CD8-positive, alpha-beta T cell (primary cell): ENCODE measurements at regions of chr13 and their contacts with region 1.

Region 1: DNA sequence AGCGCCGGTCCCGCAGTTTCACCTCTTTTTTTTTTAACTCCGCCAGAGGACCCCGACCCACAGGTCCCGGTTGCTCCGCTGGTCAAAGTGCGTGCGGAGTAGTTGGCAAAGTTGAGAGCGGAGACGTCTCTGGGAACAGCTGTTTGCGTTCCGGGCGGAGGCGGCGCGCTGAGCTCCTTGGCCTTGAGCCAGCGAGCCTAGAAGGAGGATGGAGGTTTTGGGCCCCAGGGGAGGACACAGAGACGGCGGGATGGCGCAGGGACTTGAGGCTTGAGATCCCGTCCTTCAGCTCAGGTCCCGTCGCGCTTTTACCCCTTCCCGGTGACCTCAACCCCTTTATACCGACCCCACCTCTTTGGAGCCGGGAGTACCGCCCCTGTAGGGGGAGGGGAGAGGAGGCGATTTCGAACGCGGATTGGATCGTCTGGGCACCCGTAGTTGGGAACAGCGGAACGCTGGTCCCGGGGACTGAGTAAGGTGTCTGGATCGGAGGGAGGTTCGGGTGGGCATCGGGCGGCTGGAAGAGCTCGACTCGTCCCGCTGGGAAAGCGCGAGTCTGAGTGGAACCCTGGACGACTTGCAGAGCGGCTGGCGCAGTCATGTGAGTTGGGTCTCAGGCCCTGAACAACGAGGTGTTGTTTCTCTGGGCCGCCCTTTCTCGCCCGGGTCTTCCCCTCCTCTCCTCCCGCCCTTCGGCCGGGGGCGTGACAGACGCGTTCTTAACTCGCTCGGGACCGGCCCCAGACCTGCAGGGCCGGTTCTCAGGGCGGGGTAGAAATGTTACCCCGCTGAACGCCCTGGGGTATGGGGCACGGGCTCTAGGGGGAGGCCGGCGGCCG is at the start of gene WBP4:
- DNase-seq: peak; percentile 73 to 94 (median 85)
- ATAC-seq: peak; percentile 58
- H3K4me3 ChIP-seq: peak within 1 kb of the TSS; percentile 86 to 96
- H3K4me3 Mint-ChIP-seq: peak within 1 kb of the TSS; percentile 100
- H3K27ac ChIP-seq: peak within 1 kb of the TSS; percentile 81 to 89
- H3K27ac Mint-ChIP-seq: peak within 1 kb of the TSS; percentile 100
- H3K4me1 ChIP-seq: peaks cover 15% of the 10 kb centered on the region
- H3K4me1 Mint-ChIP-seq: peaks cover 50% of the 10 kb centered on the region
- H3K27me3 ChIP-seq: no peaks in the 10 kb centered on the region
- H3K27me3 Mint-ChIP-seq: no peaks in the 10 kb centered on the region
- CTCF ChIP-seq: no peak
- total RNA-seq, gene WBP4: 6.1 to 7.2 TPM

Region 2: DNA sequence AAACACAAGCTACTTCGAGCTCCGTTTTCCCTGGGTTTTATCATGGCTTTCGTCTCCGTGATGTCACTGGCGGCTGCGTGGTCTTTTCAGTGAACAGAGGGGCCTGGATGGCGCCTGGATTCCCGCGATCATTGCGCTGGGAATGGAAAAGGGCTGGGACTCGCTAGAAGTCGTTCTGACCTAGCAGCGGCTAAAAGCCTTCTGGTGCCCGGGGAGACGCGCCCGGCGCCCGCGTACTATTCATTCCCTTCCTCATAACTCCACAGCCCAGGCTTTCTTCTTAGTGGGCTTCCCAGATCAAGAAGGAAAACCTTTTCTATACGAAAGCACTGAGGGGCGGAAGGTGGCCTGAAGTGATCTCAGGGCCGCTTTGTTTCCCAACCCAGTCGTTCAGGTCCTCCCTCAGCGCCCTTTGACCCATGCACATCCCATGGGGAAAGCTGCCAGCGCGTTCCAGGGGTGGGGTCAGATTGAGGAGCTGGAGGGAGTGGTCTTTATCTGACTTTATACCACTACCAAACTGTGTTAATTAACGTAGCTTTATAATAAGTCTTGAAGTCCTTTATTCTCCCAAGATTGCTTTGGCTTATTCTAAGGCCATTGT is 138.8 kb before region 1 on chr13:
- CTCF ChIA-PET with region 1: interaction called, 4 read pairs
- POLR2A ChIA-PET with region 1: interaction called, 18 read pairs
- intact Hi-C with region 1: loop called in 1 of 2 experiments (anchors 1 kb)
- DNase-seq: peak in 2 of 9 experiments; percentile 17 to 30
- ATAC-seq: no peak
- H3K4me3 ChIP-seq: no peak overlapping the region
- H3K4me3 Mint-ChIP-seq: peak overlapping the region; percentile 59
- H3K27ac ChIP-seq: no peak overlapping the region
- H3K27ac Mint-ChIP-seq: peak overlapping the region; percentile 82
- H3K4me1 ChIP-seq: peaks cover 8% of the 10 kb centered on the region
- H3K4me1 Mint-ChIP-seq: peaks cover 27% of the 10 kb centered on the region
- H3K27me3 ChIP-seq: no peaks in the 10 kb centered on the region
- H3K27me3 Mint-ChIP-seq: no peaks in the 10 kb centered on the region
- CTCF ChIP-seq: no peak

Region 3: GRCh38 chr13:41004875-41005693 is 56.2 kb before region 1 on chr13:
- CTCF ChIA-PET with region 1: interaction called, 3 read pairs
- POLR2A ChIA-PET with region 1: interaction called, 12 read pairs
- intact Hi-C with region 1: no loop called
- DNase-seq: peak in 2 of 9 experiments; percentile 62 to 80
- ATAC-seq: peak; percentile 83
- H3K4me3 ChIP-seq: peak overlapping the region; percentile 6 to 13
- H3K4me3 Mint-ChIP-seq: peak overlapping the region; percentile 73
- H3K27ac ChIP-seq: peak overlapping the region; percentile 18 to 76
- H3K27ac Mint-ChIP-seq: peak overlapping the region; percentile 90
- H3K4me1 ChIP-seq: peaks cover 78% of the 10 kb centered on the region
- H3K4me1 Mint-ChIP-seq: peaks cover 79% of the 10 kb centered on the region
- H3K27me3 ChIP-seq: no peaks in the 10 kb centered on the region
- H3K27me3 Mint-ChIP-seq: no peaks in the 10 kb centered on the region
- CTCF ChIP-seq: no peak

Region 4: GRCh38 chr13:41132512-41133152 is 71.3 kb after region 1 on chr13 and contains the start of gene KBTBD6:
- CTCF ChIA-PET with region 1: no interaction called
- POLR2A ChIA-PET with region 1: interaction called, 3 read pairs
- intact Hi-C with region 1: loop called (anchors 1 kb)
- DNase-seq: peak; percentile 80 to 96 (median 90)
- ATAC-seq: peak; percentile 95
- H3K4me3 ChIP-seq: peak within 1 kb of the TSS; percentile 70 to 80
- H3K4me3 Mint-ChIP-seq: peak within 1 kb of the TSS; percentile 95
- H3K27ac ChIP-seq: peak within 1 kb of the TSS; percentile 48 to 64
- H3K27ac Mint-ChIP-seq: peak within 1 kb of the TSS; percentile 93
- H3K4me1 ChIP-seq: peaks cover 43% of the 10 kb centered on the region
- H3K4me1 Mint-ChIP-seq: peaks cover 55% of the 10 kb centered on the region
- H3K27me3 ChIP-seq: no peaks in the 10 kb centered on the region
- H3K27me3 Mint-ChIP-seq: no peaks in the 10 kb centered on the region
- CTCF ChIP-seq: no peak
- total RNA-seq, gene KBTBD6: 2.2 to 2.3 TPM

Region 5: GRCh38 chr13:41145146-41145908 is 84.0 kb after region 1 on chr13:
- CTCF ChIA-PET with region 1: no interaction called
- POLR2A ChIA-PET with region 1: no interaction called
- intact Hi-C with region 1: no loop called
- DNase-seq: no peak
- ATAC-seq: no peak
- H3K4me3 ChIP-seq: no peak overlapping the region
- H3K4me3 Mint-ChIP-seq: no peak overlapping the region
- H3K27ac ChIP-seq: no peak overlapping the region
- H3K27ac Mint-ChIP-seq: no peak overlapping the region
- H3K4me1 ChIP-seq: no peaks in the 10 kb centered on the region
- H3K4me1 Mint-ChIP-seq: no peaks in the 10 kb centered on the region
- H3K27me3 ChIP-seq: no peaks in the 10 kb centered on the region
- H3K27me3 Mint-ChIP-seq: no peaks in the 10 kb centered on the region
- CTCF ChIP-seq: no peak

Region 6: GRCh38 chr13:41310963-41311606 is 249.8 kb after region 1 on chr13 and contains the start of gene NAA16:
- CTCF ChIA-PET with region 1: no interaction called
- POLR2A ChIA-PET with region 1: interaction called, 3 read pairs
- intact Hi-C with region 1: loop called (anchors 2 to 5 kb)
- DNase-seq: peak; percentile 87 to 98 (median 95)
- ATAC-seq: peak; percentile 88
- H3K4me3 ChIP-seq: peak within 1 kb of the TSS; percentile 72 to 97
- H3K4me3 Mint-ChIP-seq: peak within 1 kb of the TSS; percentile 98
- H3K27ac ChIP-seq: peak within 1 kb of the TSS; percentile 72 to 83
- H3K27ac Mint-ChIP-seq: peak within 1 kb of the TSS; percentile 96
- H3K4me1 ChIP-seq: peaks cover 25% of the 10 kb centered on the region
- H3K4me1 Mint-ChIP-seq: peaks cover 41% of the 10 kb centered on the region
- H3K27me3 ChIP-seq: no peaks in the 10 kb centered on the region
- H3K27me3 Mint-ChIP-seq: no peaks in the 10 kb centered on the region
- CTCF ChIP-seq: no peak
- total RNA-seq, gene NAA16: 103 to 105 TPM

Region 7: DNA sequence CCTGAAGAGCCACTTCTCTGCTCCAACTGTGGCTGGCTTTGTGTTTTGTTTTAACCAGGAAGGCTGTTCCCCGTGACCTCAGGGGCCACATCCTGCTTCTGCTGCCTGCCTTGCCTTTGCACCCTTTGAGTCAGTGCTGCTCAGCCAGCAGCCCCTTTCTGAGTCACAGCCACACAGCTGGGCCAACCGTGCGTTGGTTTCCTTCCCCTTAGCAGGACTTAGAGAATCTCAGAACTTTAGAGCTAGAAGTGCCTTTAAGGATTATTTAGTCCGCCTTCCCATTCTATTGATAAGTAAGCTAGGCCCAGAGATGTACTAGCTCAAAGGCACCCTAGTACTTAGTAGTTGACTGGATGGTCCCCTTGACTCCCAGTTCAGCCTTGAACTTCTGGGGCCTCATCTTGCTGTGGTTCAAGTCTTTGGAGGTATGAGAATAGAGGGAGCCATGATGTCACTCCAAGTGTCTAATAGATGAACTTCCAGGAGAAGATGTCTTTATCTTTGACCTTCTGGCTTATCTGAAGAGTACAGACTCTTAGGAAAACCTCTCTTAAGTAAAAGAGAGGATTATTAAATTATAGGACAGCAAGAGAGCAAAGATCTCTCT is 404.1 kb after region 1 on chr13:
- CTCF ChIA-PET with region 1: no interaction called
- POLR2A ChIA-PET with region 1: no interaction called
- intact Hi-C with region 1: loop called in 1 of 2 experiments (anchors 10 kb)
- DNase-seq: peak; percentile 75 to 95 (median 89)
- ATAC-seq: peak; percentile 72
- H3K4me3 ChIP-seq: peak overlapping the region in 1 of 2 experiments; percentile 6
- H3K4me3 Mint-ChIP-seq: peak overlapping the region; percentile 88
- H3K27ac ChIP-seq: peak overlapping the region; percentile 82 to 91
- H3K27ac Mint-ChIP-seq: peak overlapping the region; percentile 99
- H3K4me1 ChIP-seq: peaks cover 90% of the 10 kb centered on the region
- H3K4me1 Mint-ChIP-seq: peaks cover 92% of the 10 kb centered on the region
- H3K27me3 ChIP-seq: no peaks in the 10 kb centered on the region
- H3K27me3 Mint-ChIP-seq: no peaks in the 10 kb centered on the region
- CTCF ChIP-seq: no peak